ENCODE measurements at regions of chr6 and their contacts with region 1.

Region 1: DNA sequence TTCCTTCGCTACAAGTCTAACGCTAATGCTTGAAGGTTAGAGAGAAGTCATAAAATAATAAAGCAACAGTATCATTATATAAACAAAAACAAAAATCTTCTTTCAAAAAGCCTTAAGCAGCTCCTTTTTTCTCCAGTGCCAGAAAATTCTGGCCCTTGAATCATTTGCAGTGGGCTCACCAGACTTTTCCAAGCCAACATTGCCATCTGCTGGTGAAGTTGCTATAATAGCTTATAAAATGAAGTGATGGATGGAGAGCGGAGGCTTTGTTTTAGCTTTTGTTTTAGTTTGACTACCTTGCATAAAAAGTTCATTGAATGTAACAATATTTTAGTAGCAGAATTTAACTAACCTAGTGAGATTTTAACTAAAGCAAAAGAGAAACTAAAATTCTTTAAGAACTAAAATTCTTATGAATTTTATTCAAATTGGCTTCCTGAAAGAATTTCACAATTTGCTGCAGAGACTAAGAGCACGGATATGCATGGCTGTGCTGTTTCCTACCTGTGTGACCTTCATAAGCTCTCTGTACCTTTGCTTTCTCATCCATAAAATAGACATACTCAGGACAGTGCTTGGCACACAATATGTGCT is 44.8 kb upstream of the SLC2A12 start:
- DNase-seq: peak; percentile 84
- H3K4me3 ChIP-seq: no peak overlapping the region
- H3K27ac ChIP-seq: no peak overlapping the region
- H3K4me1 ChIP-seq: no peaks in the 10 kb centered on the region
- H3K27me3 ChIP-seq: no peaks in the 10 kb centered on the region
- CTCF ChIP-seq: peak; percentile 42 to 71 (median 65)
- POLR2A ChIP-seq: no peak

Region 2: DNA sequence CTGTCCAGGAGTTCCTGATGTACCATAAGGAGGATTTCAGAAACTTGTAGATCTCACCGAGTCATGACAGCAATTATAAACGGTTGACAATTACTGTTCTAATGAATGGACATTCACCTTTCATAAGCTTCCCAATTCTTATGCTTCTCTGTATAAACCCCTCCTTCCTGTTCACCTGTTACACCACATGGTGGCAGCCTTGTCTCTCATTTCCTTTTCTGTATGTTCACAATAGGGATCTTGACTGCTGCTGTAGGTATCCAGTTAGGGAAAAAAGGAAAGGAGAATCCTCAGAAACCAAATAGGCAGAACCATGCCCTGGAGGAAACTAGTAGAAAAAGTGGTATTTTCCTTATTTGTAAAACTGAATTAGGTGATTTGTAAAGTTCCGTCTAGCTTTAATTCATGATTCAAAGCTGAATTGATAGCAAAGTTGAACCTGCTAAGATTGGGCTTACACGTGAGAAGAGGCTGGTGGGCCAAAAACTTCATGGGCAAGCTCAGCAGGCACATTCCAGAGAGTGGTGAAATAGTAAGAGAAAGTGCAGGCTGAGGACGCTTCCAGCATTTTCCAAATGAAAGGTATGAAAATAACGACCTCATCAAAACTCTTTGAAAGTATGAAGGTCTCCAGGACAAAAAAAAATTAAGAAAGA is 173.1 kb before region 1 on chr6:
- intact Hi-C with region 1: loop called (anchors 5 kb)
- DNase-seq: peak; percentile 84
- H3K4me3 ChIP-seq: no peak overlapping the region
- H3K27ac ChIP-seq: no peak overlapping the region
- H3K4me1 ChIP-seq: no peaks in the 10 kb centered on the region
- H3K27me3 ChIP-seq: no peaks in the 10 kb centered on the region
- CTCF ChIP-seq: peak; percentile 71 to 89 (median 84)
- POLR2A ChIP-seq: no peak

Region 3: DNA sequence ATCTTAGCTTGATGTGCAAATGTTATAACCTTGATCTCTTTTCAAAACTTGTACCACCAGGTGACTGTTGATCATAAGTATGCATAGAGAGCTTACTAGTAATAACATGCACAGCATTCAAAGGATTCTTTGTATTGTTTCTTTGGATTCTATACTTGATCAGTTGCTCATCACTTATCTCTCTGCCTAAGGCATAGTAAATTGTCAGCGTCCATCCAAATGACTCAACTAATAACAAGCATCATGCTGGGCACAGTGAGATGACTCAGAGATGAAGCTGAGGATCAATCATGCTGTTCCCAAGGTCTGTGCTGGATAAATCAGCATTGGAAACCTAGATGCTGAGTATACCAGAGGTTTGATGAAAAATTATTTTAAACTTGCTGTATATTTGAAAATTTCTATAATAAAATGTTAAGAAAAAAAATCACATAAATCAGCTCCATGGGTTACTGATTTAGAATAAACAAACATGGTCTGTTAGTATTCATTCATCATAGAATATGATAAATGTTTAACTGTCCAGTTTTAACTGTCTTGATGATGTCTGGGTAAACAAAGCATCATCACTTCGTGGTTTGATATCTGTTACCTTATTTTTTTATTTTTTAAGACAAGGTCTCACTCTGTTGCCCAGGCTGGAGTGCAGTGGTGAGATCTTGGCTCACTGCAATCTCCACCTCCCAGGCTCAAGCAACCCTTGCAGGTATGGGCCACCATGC is 266.3 kb after region 1 on chr6:
- intact Hi-C with region 1: no loop called
- DNase-seq: no peak
- H3K4me3 ChIP-seq: no peak overlapping the region
- H3K27ac ChIP-seq: no peak overlapping the region
- H3K4me1 ChIP-seq: no peaks in the 10 kb centered on the region
- H3K27me3 ChIP-seq: no peaks in the 10 kb centered on the region
- CTCF ChIP-seq: no peak
- POLR2A ChIP-seq: no peak